ENCODE measurements at regions of chr1 and their contacts with region 1.

Region 1: DNA sequence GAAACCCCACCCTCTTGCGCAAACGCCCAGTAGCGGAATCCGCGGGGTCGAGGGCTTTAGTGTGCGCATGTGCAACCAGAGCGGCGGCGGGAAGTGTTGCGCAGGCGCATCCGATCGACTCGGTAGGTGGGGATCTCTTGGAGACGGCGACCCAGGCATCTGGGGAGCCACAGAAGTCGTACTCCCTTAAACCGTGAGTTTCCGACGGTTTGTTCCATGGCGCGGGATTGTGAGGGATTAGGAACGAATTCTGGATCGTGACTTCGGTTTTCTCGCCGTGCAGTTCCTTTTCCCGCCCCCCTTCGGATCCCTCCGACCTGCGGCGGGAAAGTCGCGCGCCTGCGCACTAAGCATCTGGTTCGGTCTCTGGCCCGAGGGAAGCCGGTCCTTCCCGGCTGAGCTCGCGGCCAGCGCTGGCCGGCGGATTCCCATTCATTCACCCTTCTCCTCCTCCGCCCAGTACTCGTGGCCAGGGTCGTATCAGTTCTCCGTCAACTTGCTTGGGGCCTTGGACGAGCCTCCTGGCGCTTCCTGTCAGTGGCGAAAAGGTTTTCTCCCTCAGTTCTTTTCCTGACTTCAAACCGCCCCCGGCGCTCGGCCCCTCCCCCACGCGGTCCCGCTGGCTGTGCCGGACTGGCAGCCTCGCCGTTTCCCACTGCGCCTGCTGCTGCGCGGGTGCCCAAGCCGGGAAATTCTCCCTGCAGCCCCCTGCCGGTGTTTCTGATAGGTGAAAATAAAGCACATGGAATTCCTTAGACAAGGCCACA is at the start of gene CDC7:
- DNase-seq: peak; percentile 91 to 95 (median 93)
- ATAC-seq: peak; percentile 96 to 97 (median 96)
- H3K4me3 ChIP-seq: peak within 1 kb of the TSS; percentile 45 to 79 (median 64)
- H3K27ac ChIP-seq: peak within 1 kb of the TSS; percentile 54 to 92 (median 84)
- H3K4me1 ChIP-seq: peaks cover 0 to 35% (median 13%) of the 10 kb centered on the region in 12 donors
- H3K27me3 ChIP-seq: no peaks in the 10 kb centered on the region
- CTCF ChIP-seq: peak; percentile 11 to 59 (median 41)
- POLR2A ChIP-seq: peak in 1 of 2 donors; percentile 27
- total RNA-seq, gene CDC7: 0.36 to 6.3 (median 0.97) TPM

Region 2: GRCh38 chr1:91021686-91022517 is 479.0 kb before region 1 on chr1 and contains the start of gene ZNF644:
- intact Hi-C with region 1: loop called in 1 of 10 experiments (anchors 5 kb)
- DNase-seq: peak; percentile 92 to 95 (median 95)
- ATAC-seq: peak; percentile 93 to 97 (median 96)
- H3K4me3 ChIP-seq: peak within 1 kb of the TSS; percentile 66 to 97 (median 88)
- H3K27ac ChIP-seq: peak within 1 kb of the TSS; percentile 95 to 100 (median 100)
- H3K4me1 ChIP-seq: peaks cover 0 to 54% (median 40%) of the 10 kb centered on the region in 12 donors
- H3K27me3 ChIP-seq: no peaks in the 10 kb centered on the region
- CTCF ChIP-seq: no peak
- POLR2A ChIP-seq: peak; percentile 16 to 75
- total RNA-seq, gene ZNF644: 23.1 to 46.6 (median 33.9) TPM

Region 3: DNA sequence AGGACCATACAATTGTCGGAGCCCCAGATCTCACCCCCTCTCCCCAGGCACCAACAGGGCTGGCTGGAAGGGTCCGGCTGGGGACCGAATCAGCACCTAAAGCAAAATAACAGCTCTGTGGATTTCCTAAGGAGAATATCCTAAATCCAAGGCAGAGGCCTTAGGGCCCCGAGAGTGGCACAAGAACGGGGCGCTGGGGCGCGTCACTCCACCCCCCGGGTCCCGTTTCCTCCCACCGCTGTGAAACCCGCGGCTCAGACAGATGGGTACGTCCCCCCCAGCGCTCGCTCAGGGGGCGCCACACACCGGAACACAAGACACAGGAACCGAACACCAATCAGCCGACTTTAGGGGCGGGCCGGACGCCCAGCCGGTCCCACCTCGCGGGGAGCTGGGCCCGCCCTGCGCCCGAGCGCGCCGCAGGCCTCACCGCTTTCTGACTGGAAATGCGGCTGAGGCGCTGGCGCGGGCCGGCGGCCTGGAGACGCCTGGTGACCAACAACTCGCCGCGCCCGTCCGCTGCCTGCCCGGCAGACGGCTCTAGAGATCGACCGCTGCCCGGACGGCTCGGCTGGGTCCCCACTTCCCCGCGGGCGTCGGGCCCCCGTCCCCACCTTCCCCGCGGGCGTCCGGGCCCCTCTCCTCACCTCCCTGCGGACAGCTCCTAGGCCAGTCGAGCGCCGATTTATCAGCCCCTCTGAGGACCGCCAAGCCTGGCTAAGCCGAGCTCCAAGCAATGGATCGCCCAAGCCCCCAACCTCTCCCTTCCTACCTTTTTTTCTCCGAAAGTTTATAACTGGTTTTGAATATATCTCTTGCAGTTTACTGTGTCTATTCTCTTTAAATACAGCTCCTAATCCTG is 96.6 kb before region 1 on chr1 and contains the start of gene HFM1:
- intact Hi-C with region 1: loop called in 6 of 10 experiments (anchors 5 to 10 kb)
- DNase-seq: peak; percentile 81 to 90 (median 90)
- ATAC-seq: peak; percentile 97 to 99 (median 99)
- H3K4me3 ChIP-seq: peak within 1 kb of the TSS; percentile 49 to 86 (median 64)
- H3K27ac ChIP-seq: peak within 1 kb of the TSS; percentile 44 to 91 (median 86)
- H3K4me1 ChIP-seq: peaks cover 0 to 19% (median 0%) of the 10 kb centered on the region in 12 donors
- H3K27me3 ChIP-seq: peaks cover 0 to 17% (median 0%) of the 10 kb centered on the region in 9 donors
- CTCF ChIP-seq: peak in 4 of 12 donors; percentile 28 to 42 (median 34)
- POLR2A ChIP-seq: peak in 1 of 2 donors; percentile 60
- total RNA-seq, gene HFM1: 1.5 to 5.8 (median 2.4) TPM

Region 4: DNA sequence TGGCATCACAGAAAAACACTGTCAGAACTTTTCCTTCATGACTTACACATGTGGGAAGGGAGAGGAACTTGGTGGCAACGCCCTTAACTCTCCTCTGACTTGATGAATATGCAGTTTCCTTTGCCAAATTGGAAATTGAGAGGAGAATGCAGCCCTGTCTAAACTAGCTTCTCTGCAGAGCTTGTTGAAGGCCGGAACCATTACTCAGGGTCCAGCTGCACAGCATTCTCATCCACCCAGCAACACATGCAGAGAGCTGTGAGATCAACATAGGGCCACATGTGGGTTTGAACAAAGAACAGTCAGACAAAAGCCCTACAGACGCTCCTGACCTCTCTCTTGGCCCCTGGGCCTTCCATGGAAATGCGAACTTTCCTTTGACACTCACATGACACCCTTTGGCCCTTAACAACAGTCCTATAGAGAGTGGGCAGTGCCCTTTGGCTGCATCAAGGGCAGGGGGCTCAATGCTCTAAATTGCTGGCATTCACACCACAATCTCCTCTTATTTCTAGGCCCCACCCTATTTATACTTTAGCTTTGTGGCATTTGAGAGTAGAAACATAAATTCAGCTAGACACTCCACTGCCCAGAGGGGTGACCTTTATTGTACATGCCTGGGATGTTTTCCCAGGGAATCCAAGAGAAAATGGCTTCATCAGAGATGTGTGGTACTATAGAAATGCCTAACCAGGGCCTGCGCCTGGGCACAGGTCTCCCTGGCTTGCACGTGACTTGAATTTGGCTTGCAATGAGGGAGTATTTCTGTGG is 64.1 kb after region 1 on chr1:
- intact Hi-C with region 1: no loop called
- DNase-seq: peak in 1 of 5 donors; percentile 39
- ATAC-seq: peak in 3 of 4 donors; percentile 53 to 60 (median 57)
- H3K4me3 ChIP-seq: no peak overlapping the region
- H3K27ac ChIP-seq: peak overlapping the region in 5 of 12 donors; percentile 31 to 65 (median 48)
- H3K4me1 ChIP-seq: peaks cover 0 to 21% (median 7%) of the 10 kb centered on the region in 12 donors
- H3K27me3 ChIP-seq: no peaks in the 10 kb centered on the region
- CTCF ChIP-seq: no peak
- POLR2A ChIP-seq: no peak

Region 5: DNA sequence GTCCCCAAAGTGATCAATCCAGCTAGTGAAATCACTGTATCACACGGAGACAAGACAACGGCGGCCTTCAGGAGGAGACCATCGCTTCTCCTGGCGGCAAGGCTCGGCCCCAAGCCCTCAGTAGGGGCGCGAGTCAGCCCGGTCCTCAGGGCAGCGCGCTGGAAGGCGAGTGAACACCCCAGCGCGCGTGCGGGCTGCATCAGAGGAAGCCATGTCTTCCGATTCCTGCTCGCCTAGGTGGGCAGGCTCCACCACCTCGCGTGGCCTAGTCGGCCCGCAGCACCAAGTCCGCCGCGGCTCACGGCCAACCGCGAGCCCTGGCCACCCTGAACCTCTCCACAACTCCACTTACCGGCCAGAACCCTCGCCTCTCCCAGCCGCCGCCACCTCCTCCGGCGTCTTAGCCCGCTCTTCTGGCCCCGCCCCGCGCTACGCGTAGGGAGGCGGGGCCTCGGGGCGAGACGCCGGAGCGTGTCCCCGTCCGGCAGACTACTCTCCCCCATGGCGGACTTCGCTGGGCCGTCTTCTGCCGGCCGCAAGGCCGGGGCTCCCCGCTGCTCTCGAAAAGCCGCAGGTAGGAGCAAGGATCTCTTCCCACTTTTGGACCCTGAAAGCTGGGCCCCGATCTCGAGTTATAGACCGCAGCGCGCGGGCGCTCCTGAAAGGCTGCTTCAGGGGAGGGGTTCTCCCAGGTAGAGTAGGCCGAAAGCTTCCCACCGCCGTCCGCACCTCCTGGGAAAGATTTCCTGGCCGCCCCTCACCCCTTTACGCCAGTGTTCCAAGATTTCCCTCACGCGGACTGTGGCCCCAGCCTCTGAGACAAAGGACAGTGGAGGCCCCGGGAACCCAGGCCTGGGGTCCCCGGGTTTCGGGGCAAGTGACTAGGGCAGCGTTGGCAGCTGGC is 797.9 kb after region 1 on chr1 and contains the starts of genes GLMN and RPAP2:
- intact Hi-C with region 1: loop called in 3 of 10 experiments (anchors 10 kb)
- DNase-seq: peak; percentile 79 to 91 (median 85)
- ATAC-seq: peak; percentile 98 to 100 (median 100)
- H3K4me3 ChIP-seq: peak within 1 kb of the TSS; percentile 59 to 97 (median 86)
- H3K27ac ChIP-seq: peak within 1 kb of the TSS; percentile 85 to 95 (median 92)
- H3K4me1 ChIP-seq: peaks cover 0 to 23% (median 13%) of the 10 kb centered on the region in 12 donors
- H3K27me3 ChIP-seq: no peaks in the 10 kb centered on the region
- CTCF ChIP-seq: peak in 5 of 12 donors; percentile 5 to 36 (median 12)
- POLR2A ChIP-seq: peak; percentile 76 to 92
- total RNA-seq, gene GLMN: 3.0 to 7.2 (median 5.6) TPM
- total RNA-seq, gene RPAP2: 6.7 to 27.7 (median 23.3) TPM